Activated CD8-positive, alpha-beta T cell treated with anti-CD3 and anti-CD28 coated beads for 36 hours (primary cell): ENCODE measurements at regions of chr17 and their contacts with region 1.

Region 1: DNA sequence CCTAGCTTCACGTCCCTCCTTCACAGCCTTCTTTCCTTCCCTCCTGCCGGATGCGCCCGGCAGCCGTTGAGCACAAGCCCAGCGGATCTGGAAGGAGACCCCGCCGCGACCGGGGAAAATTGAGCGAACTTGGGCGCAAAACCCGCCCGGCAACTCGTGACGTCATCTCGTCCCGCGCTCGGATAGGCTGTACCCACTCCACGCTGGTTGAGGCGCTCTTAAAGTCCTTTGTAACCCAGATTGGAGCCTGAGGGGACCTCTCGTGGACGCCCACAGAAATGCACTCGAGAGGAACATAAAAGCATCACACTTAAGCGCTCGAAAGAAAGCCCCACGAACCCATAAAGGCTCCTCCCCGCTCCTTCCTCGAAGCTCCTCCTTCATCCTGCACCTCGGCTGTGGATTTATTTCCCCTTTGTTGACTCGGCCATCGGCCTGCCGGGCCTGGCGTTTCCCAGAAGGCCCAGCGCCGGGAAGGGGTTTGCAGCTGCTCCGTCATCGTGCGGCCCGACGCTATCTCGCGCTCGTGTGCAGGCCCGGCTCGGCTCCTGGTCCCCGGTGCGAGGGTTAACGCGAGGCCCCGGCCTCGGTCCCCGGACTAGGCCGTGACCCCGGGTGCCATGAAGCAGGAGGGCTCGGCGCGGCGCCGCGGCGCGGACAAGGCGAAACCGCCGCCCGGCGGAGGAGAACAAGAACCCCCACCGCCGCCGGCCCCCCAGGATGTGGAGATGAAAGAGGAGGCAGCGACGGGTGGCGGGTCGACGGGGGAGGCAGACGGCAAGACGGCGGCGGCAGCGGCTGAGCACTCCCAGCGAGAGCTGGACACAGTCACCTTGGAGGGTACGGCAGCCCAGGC is at the start of gene PSMD3:
- DNase-seq: peak; percentile 100
- ATAC-seq: peak; percentile 96
- H3K4me3 Mint-ChIP-seq: peak within 1 kb of the TSS; percentile 92
- H3K27ac Mint-ChIP-seq: peak within 1 kb of the TSS; percentile 92
- H3K4me1 Mint-ChIP-seq: peaks cover 25% of the 10 kb centered on the region
- H3K27me3 Mint-ChIP-seq: no peaks in the 10 kb centered on the region
- CTCF ChIP-seq: peak; percentile 50
- total RNA-seq, gene PSMD3: 149 to 153 TPM

Region 2: GRCh38 chr17:39863918-39864746 is 116.4 kb before region 1 on chr17 and contains the start of gene IKZF3:
- CTCF ChIA-PET with region 1: interaction called, 3 read pairs
- POLR2A ChIA-PET with region 1: interaction called, 3 read pairs
- intact Hi-C with region 1: loop called (anchors 10 kb)
- DNase-seq: peak; percentile 90
- ATAC-seq: peak; percentile 60
- H3K4me3 Mint-ChIP-seq: peak within 1 kb of the TSS; percentile 85
- H3K27ac Mint-ChIP-seq: peak within 1 kb of the TSS; percentile 90
- H3K4me1 Mint-ChIP-seq: peaks cover 48% of the 10 kb centered on the region
- H3K27me3 Mint-ChIP-seq: no peaks in the 10 kb centered on the region
- CTCF ChIP-seq: no peak
- total RNA-seq, gene IKZF3: 52.1 to 52.2 TPM

Region 3: GRCh38 chr17:39927101-39927928 is 53.3 kb before region 1 on chr17 and contains the starts of genes LRRC3C and ORMDL3:
- CTCF ChIA-PET with region 1: interaction called, 10 read pairs
- POLR2A ChIA-PET with region 1: interaction called, 4 read pairs
- intact Hi-C with region 1: no loop called
- DNase-seq: peak; percentile 93
- ATAC-seq: peak; percentile 74
- H3K4me3 Mint-ChIP-seq: peak within 1 kb of the TSS; percentile 94
- H3K27ac Mint-ChIP-seq: peak within 1 kb of the TSS; percentile 87
- H3K4me1 Mint-ChIP-seq: peaks cover 52% of the 10 kb centered on the region
- H3K27me3 Mint-ChIP-seq: no peaks in the 10 kb centered on the region
- CTCF ChIP-seq: no peak
- total RNA-seq, gene LRRC3C: not detected
- total RNA-seq, gene ORMDL3: 78.8 to 80.5 TPM

Region 4: DNA sequence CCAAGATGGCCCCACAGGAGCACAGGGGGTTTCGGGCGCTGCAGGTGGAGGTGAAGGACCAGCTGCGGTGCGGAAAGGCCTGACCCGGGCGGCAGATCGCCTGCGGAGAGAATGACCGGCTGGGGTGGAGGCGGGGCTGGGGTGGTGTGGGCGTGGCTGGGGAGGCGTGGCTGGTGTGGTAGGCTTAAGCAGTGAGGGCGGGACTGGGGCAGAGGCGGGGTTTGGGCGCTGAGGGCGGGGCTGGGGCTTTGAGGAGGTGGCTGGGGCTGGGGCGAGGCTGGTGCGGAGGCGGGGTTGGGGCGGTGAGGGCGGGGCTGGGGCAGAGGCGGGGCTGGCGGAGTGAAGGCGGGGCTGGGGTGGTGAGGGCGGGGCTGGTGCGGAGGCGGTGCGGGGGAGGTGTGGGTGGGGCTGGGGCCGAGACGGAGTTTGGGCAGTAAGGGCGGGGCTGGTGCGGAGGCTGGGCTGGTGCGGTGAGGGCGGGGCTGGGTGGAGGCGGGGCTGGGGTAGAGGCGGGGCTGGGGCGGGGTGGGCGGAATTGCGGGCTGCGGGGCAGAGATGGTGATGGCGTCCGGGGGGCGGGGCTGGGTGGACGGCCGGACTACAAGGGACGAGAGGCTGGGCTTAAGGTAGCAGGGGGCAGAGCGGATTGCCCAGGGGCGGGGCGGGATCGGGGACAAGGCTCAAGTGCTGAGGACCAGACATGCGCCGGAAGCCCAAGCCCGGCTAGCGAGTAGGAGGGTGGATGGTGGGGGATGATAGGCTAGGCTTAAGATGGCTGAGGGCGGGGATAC is 27.7 kb before region 1 on chr17:
- CTCF ChIA-PET with region 1: interaction called, 40 read pairs
- POLR2A ChIA-PET with region 1: interaction called, 4 read pairs
- intact Hi-C with region 1: no loop called
- DNase-seq: peak; percentile 94
- ATAC-seq: peak; percentile 83
- H3K4me3 Mint-ChIP-seq: peak overlapping the region; percentile 77
- H3K27ac Mint-ChIP-seq: peak overlapping the region; percentile 84
- H3K4me1 Mint-ChIP-seq: peaks cover 22% of the 10 kb centered on the region
- H3K27me3 Mint-ChIP-seq: no peaks in the 10 kb centered on the region
- CTCF ChIP-seq: no peak

Region 5: GRCh38 chr17:39960524-39961041 is 20.0 kb before region 1 on chr17:
- CTCF ChIA-PET with region 1: interaction called, 40 read pairs
- POLR2A ChIA-PET with region 1: interaction called, 6 read pairs
- intact Hi-C with region 1: no loop called
- DNase-seq: no peak
- ATAC-seq: no peak
- H3K4me3 Mint-ChIP-seq: no peak overlapping the region
- H3K27ac Mint-ChIP-seq: no peak overlapping the region
- H3K4me1 Mint-ChIP-seq: peaks cover 25% of the 10 kb centered on the region
- H3K27me3 Mint-ChIP-seq: no peaks in the 10 kb centered on the region
- CTCF ChIP-seq: no peak

Region 6: DNA sequence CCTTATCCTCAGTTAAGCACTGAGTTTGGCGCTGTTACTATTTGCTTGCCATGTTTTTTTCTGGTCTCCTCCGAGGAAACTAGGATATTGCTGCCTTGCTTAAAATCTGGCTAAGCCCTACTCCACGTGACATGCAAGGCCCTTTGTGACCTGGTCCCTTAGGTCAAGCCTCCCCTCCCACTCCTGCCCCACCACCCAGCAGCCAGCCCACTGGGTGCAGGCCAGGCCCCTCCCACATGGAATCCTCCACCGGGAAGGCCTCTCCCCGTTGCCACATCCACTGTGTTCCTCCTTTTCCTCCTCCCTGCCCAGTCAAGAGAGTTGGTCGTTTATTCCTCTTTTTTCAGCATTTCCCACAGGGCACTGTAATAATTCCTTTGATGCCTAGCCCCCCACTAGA is 16.2 kb after region 1 on chr17:
- CTCF ChIA-PET with region 1: interaction called, 11 read pairs
- POLR2A ChIA-PET with region 1: interaction called, 4 read pairs
- intact Hi-C with region 1: no loop called
- DNase-seq: no peak
- ATAC-seq: no peak
- H3K4me3 Mint-ChIP-seq: no peak overlapping the region
- H3K27ac Mint-ChIP-seq: no peak overlapping the region
- H3K4me1 Mint-ChIP-seq: peaks cover 6% of the 10 kb centered on the region
- H3K27me3 Mint-ChIP-seq: no peaks in the 10 kb centered on the region
- CTCF ChIP-seq: no peak

Region 7: GRCh38 chr17:40026816-40027613 is 46.4 kb after region 1 on chr17:
- CTCF ChIA-PET with region 1: interaction called, 15 read pairs
- POLR2A ChIA-PET with region 1: no interaction called
- intact Hi-C with region 1: no loop called
- DNase-seq: peak; percentile 83
- ATAC-seq: peak; percentile 93
- H3K4me3 Mint-ChIP-seq: no peak overlapping the region
- H3K27ac Mint-ChIP-seq: no peak overlapping the region
- H3K4me1 Mint-ChIP-seq: peaks cover 16% of the 10 kb centered on the region
- H3K27me3 Mint-ChIP-seq: no peaks in the 10 kb centered on the region
- CTCF ChIP-seq: peak; percentile 92

Region 8: GRCh38 chr17:40134184-40134583 is 153.6 kb after region 1 on chr17:
- CTCF ChIA-PET with region 1: no interaction called
- POLR2A ChIA-PET with region 1: no interaction called
- intact Hi-C with region 1: no loop called
- DNase-seq: no peak
- ATAC-seq: no peak
- H3K4me3 Mint-ChIP-seq: no peak overlapping the region
- H3K27ac Mint-ChIP-seq: peak overlapping the region; percentile 72
- H3K4me1 Mint-ChIP-seq: peaks cover 25% of the 10 kb centered on the region
- H3K27me3 Mint-ChIP-seq: no peaks in the 10 kb centered on the region
- CTCF ChIP-seq: no peak